Activated CD8-positive, alpha-beta T cell treated with anti-CD3 and anti-CD28 coated beads, Interleukin-2, amount 10 ng/mL, durations not matched to agents 7 days and 5 days (primary cell): ENCODE measurements at regions of chr19 and their contacts with region 1.

Region 1: GRCh38 chr19:10695401-10696398 is 5.5 kb upstream of the QTRT1 start:
- DNase-seq: peak; percentile 94
- ATAC-seq: peak; percentile 96
- H3K4me3 Mint-ChIP-seq: peak overlapping the region; percentile 69
- H3K27ac Mint-ChIP-seq: no peak overlapping the region
- H3K4me1 Mint-ChIP-seq: peaks cover 17% of the 10 kb centered on the region
- H3K27me3 Mint-ChIP-seq: peaks cover 9% of the 10 kb centered on the region

Region 2: DNA sequence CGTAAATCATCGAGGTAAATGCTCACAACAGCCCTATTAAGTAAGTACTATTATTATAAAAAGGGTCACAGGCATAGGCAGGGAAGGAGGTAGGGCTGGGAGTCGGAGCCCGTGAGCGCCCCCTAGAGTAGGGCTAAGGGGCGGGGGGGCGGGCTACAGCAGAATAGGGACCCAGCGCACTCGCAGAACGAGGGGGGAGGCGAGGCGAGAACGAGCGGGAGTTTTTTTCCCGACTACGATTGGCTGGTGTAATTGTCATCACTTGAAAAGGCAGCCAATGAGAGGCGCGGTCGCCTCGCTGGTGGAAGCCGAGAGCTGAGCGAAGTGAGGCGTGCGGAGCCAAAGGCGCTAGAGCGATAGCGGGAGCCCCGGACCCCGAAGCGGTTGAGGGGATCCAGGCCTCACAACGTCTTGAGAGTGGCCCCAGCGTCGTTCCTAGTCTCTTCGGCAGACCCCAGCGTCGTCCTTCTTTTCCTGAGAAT is 216.8 kb before region 1 on chr19:
- CTCF ChIA-PET with region 1: interaction called, 20 read pairs
- POLR2A ChIA-PET with region 1: interaction called, 3 read pairs
- DNase-seq: peak; percentile 93
- ATAC-seq: peak; percentile 97
- H3K4me3 Mint-ChIP-seq: peak overlapping the region; percentile 55
- H3K27ac Mint-ChIP-seq: peak overlapping the region; percentile 57
- H3K4me1 Mint-ChIP-seq: peaks cover 30% of the 10 kb centered on the region
- H3K27me3 Mint-ChIP-seq: no peaks in the 10 kb centered on the region

Region 3: GRCh38 chr19:10565567-10566407 is 129.9 kb before region 1 on chr19 and contains the start of gene KRI1:
- CTCF ChIA-PET with region 1: interaction called, 10 read pairs
- POLR2A ChIA-PET with region 1: no interaction called
- DNase-seq: peak; percentile 99
- ATAC-seq: peak; percentile 51
- H3K4me3 Mint-ChIP-seq: peak within 1 kb of the TSS; percentile 98
- H3K27ac Mint-ChIP-seq: peak within 1 kb of the TSS; percentile 94
- H3K4me1 Mint-ChIP-seq: peaks cover 46% of the 10 kb centered on the region
- H3K27me3 Mint-ChIP-seq: no peaks in the 10 kb centered on the region
- total RNA-seq, gene KRI1: 64.0 to 72.8 TPM

Region 4: GRCh38 chr19:10653715-10654492 is 41.8 kb before region 1 on chr19 and contains the start of gene ILF3:
- CTCF ChIA-PET with region 1: interaction called, 11 read pairs
- POLR2A ChIA-PET with region 1: interaction called, 5 read pairs
- DNase-seq: peak; percentile 100
- ATAC-seq: peak; percentile 79
- H3K4me3 Mint-ChIP-seq: peak within 1 kb of the TSS; percentile 84
- H3K27ac Mint-ChIP-seq: peak within 1 kb of the TSS; percentile 94
- H3K4me1 Mint-ChIP-seq: peaks cover 37% of the 10 kb centered on the region
- H3K27me3 Mint-ChIP-seq: no peaks in the 10 kb centered on the region
- total RNA-seq, gene ILF3: 407 to 408 TPM

Region 5: GRCh38 chr19:10677751-10678150 is 17.9 kb before region 1 on chr19:
- CTCF ChIA-PET with region 1: interaction called, 13 read pairs
- POLR2A ChIA-PET with region 1: no interaction called
- DNase-seq: no peak
- ATAC-seq: no peak
- H3K4me3 Mint-ChIP-seq: no peak overlapping the region
- H3K27ac Mint-ChIP-seq: no peak overlapping the region
- H3K4me1 Mint-ChIP-seq: no peaks in the 10 kb centered on the region
- H3K27me3 Mint-ChIP-seq: no peaks in the 10 kb centered on the region

Region 6: GRCh38 chr19:10742476-10742875 is 46.8 kb after region 1 on chr19:
- CTCF ChIA-PET with region 1: no interaction called
- POLR2A ChIA-PET with region 1: no interaction called
- DNase-seq: no peak
- ATAC-seq: no peak
- H3K4me3 Mint-ChIP-seq: no peak overlapping the region
- H3K27ac Mint-ChIP-seq: peak overlapping the region; percentile 61
- H3K4me1 Mint-ChIP-seq: peaks cover 46% of the 10 kb centered on the region
- H3K27me3 Mint-ChIP-seq: no peaks in the 10 kb centered on the region

Region 7: DNA sequence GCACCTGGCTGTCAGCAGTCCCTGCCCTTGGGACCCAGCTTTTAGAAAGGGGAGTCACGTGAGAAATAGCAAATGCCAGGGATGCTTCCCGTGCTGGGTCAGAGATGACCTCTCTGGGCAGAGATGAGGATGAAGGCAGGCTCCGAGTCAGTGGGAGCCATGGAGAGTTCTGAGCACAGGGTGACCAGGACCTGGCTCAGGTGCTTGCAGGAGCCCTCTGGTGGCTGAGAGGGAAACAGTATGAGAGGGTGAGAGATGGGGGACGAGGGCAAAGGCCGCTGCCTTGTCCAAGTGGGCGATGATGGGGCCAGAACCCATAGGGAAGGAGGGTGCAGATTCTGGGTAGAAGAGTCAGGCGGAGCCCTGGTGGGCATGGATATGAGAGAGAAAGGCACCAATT is 124.5 kb after region 1 on chr19:
- CTCF ChIA-PET with region 1: no interaction called
- POLR2A ChIA-PET with region 1: no interaction called
- DNase-seq: no peak
- ATAC-seq: no peak
- H3K4me3 Mint-ChIP-seq: no peak overlapping the region
- H3K27ac Mint-ChIP-seq: peak overlapping the region; percentile 46
- H3K4me1 Mint-ChIP-seq: peaks cover 29% of the 10 kb centered on the region
- H3K27me3 Mint-ChIP-seq: no peaks in the 10 kb centered on the region